Adrenal gland (tissue), 19 donors: ENCODE measurements at regions of chr3 and their contacts with region 1.

Region 1: DNA sequence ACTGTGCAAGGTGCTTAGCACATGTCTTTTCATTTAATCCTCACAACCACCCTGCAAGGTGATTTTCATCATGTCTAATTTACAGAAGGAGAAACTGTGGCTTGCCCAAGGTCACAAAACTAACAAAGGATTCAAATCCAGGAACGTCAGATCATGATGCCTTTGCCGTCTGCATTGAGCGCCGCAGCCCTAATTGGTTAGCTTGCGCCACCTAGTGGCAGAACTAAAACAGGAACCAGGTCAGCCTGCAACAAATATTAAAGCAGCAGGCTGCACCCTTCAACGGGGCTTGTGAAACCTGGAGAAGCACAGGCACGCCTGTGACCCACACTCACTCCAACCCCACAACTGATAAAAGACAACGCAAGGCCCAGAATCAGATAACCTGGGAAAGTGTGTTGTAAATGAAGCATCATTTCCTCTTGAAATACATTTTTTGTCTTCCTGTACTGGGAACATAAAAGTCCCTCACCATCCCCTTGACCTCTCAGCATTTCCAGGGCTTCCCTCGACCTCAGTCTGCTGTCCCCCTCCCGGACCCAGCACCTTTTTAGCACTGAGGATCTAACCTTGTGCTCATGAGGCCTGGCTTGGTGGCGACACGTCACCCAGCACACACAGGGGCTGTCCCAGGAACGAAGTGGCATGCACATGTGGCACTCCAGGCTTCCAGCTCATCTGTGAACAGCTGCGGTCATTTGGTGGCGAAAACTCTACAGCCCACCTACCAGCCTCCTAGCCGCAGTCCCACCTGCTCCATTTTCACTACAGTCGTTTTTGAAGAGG is 17.3 kb downstream of the DPH3 start:
- DNase-seq: peak; percentile 82 to 95 (median 87)
- H3K4me3 ChIP-seq: no peak overlapping the region
- H3K27ac ChIP-seq: no peak overlapping the region
- H3K4me1 ChIP-seq: peaks cover 0 to 12% of the 10 kb centered on the region in 2 donors
- H3K27me3 ChIP-seq: no peaks in the 10 kb centered on the region
- CTCF ChIP-seq: peak; percentile 92 to 99 (median 94)
- POLR2A ChIP-seq: no peak

Region 2: DNA sequence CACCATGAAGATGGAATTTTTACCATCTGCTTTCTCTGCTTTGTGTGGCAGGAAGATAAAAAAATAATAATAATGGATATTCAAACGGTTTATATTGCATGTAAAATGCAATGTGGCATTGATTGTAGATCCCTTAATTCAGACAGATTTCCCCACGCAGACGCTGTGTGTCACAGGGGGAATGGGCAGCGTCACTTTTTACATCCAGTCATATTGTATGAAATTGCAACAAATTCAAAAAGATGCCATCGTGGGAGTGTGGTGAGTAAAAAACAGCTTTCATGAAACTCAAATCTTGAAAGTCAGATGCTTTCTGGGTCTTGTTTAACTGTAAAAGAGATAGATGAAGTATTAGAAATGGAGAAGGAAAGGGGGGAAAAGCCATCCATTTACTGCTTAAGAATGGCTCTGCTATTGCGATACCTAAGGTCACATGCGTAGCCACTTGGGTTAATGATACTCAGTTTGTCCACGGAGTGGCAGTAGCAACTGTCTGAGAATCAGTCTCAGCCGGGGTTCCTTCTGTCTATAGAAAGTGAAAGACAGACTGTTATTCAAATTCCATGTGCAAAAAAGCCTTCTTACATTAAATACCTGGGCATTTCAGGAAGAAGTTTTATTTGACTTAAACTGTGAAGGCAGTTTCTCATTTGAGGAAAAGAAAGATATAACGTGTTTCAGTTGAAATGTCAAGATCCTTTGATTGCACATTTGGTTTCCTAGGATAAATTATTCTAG is 617.4 kb before region 1 on chr3:
- intact Hi-C with region 1: loop called in 1 of 2 experiments (anchors 10 kb)
- DNase-seq: peak; percentile 74 to 90 (median 80)
- H3K4me3 ChIP-seq: peak overlapping the region in 2 of 4 donors; percentile 4 to 39
- H3K27ac ChIP-seq: peak overlapping the region in 3 of 5 donors; percentile 2 to 66 (median 47)
- H3K4me1 ChIP-seq: peaks cover 20 to 32% of the 10 kb centered on the region in 2 donors
- H3K27me3 ChIP-seq: no peaks in the 10 kb centered on the region
- CTCF ChIP-seq: peak; percentile 51 to 92 (median 82)
- POLR2A ChIP-seq: no peak

Region 3: GRCh38 chr3:15815696-15816095 is 431.8 kb before region 1 on chr3:
- intact Hi-C with region 1: loop called (anchors 5 kb)
- DNase-seq: no peak
- H3K4me3 ChIP-seq: no peak overlapping the region
- H3K27ac ChIP-seq: no peak overlapping the region
- H3K4me1 ChIP-seq: peaks cover 0 to 13% of the 10 kb centered on the region in 2 donors
- H3K27me3 ChIP-seq: no peaks in the 10 kb centered on the region
- CTCF ChIP-seq: peak; percentile 18 to 63 (median 54)
- POLR2A ChIP-seq: no peak

Region 4: DNA sequence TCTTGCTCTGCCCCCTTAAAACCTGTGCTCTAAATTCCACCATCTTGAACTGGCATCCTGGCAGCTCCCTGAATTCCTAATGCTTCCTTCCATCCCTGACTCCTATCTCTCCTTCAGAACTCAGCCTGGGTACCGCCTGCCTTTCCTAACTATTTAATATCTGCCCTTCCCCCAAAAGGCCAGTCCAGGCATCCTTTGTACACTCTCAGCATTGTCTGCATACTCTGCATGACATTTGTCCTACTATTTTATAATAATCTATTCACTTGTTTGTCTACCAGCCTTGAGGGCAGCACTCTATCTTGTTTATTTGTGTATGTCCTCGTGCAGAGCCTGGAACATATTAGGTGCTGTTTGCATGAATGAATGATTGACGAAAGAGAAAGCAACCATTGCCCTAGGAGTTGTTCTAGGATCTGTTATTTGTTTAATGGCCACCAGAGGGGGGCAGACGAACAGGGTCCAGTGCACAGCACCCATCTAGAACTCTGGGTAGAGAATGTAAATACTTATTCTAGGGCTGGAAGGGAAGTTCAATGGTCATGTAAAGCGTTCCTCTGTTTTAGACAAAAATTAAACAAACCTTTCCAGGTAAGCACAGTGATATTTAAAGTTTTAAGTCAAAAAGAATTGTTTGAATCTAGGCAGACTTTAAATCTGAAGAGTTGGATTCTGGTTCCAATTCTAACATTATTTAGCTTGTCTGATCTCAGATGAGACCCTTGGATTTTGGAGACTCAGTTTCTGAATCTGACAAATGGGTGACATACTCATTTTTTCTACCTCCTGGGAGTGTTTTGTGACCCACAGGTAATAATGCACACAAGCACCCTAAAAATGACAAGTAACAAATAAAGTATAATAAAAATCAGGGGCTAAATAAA is 198.8 kb before region 1 on chr3:
- intact Hi-C with region 1: loop called (anchors 2 to 5 kb)
- DNase-seq: peak; percentile 43 to 79 (median 63)
- H3K4me3 ChIP-seq: peak overlapping the region in 1 of 4 donors; percentile 20
- H3K27ac ChIP-seq: no peak overlapping the region
- H3K4me1 ChIP-seq: no peaks in the 10 kb centered on the region
- H3K27me3 ChIP-seq: no peaks in the 10 kb centered on the region
- CTCF ChIP-seq: peak; percentile 55 to 94 (median 89)
- POLR2A ChIP-seq: no peak

Region 5: GRCh38 chr3:16177962-16178627 is 69.4 kb before region 1 on chr3:
- intact Hi-C with region 1: loop called (anchors 5 kb)
- DNase-seq: peak; percentile 68 to 90 (median 84)
- H3K4me3 ChIP-seq: peak overlapping the region in 1 of 4 donors; percentile 35
- H3K27ac ChIP-seq: no peak overlapping the region
- H3K4me1 ChIP-seq: peaks cover 0 to 13% of the 10 kb centered on the region in 2 donors
- H3K27me3 ChIP-seq: no peaks in the 10 kb centered on the region
- CTCF ChIP-seq: peak; percentile 93 to 98 (median 94)
- POLR2A ChIP-seq: no peak